ENCODE measurements at regions of chr15 and their contacts with region 1.

Region 1: GRCh38 chr15:28899061-28899738 is 13.4 kb downstream of the APBA2 start:
- DNase-seq: no peak
- H3K4me3 ChIP-seq: no peak overlapping the region
- H3K27ac ChIP-seq: no peak overlapping the region
- H3K4me1 ChIP-seq: no peaks in the 10 kb centered on the region
- H3K27me3 ChIP-seq: peaks cover 52% of the 10 kb centered on the region
- CTCF ChIP-seq: no peak

Region 2: DNA sequence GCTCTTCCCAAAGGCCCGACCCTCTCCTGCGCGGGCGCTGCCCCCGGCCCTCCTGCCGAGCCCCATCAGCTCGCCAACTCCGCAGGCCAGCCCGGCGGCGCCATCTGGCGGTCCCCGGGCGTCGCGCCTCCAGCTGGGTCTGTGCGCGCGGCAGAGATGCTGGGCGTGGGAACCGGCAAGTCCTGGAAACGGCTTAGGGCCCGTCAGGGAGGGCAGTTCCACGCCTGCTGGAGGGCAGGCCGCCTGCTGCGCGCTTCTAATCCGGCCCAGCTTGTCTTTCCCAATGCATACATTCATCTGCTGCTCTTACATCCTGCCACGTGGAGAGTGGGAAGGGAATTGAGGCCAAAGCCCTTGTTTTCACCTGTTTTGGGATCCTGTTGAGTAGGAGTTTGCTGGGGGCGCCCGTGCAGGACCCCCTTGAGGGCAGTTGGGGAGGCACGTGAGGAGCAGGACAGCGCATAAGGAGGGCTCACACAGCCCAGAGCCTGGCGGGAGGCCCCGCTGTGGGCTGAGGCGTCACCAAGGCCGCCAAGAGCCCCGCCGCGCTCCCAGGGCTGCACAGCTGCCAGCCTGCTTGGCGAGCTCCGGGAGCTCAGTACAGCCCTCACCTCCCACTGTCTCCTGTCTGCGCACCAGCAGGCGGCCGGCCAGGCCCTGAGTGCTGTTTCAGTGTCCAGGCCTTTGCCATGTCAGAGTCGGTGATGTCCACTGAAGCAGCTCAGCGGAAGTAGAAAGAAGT is 204.8 kb after region 1 on chr15:
- CTCF ChIA-PET with region 1: interaction called, 12 read pairs
- POLR2A ChIA-PET with region 1: no interaction called
- intact Hi-C with region 1: no loop called
- DNase-seq: peak in 1 of 2 experiments; percentile 15
- H3K4me3 ChIP-seq: no peak overlapping the region
- H3K27ac ChIP-seq: no peak overlapping the region
- H3K4me1 ChIP-seq: no peaks in the 10 kb centered on the region
- H3K27me3 ChIP-seq: peaks cover 33% of the 10 kb centered on the region; the same call in 1 of the 2 replicates
- CTCF ChIP-seq: no peak